Left ventricle myocardium superior (tissue), 1 donor: ENCODE measurements at regions of chr1 and their contacts with region 1.

Region 1: DNA sequence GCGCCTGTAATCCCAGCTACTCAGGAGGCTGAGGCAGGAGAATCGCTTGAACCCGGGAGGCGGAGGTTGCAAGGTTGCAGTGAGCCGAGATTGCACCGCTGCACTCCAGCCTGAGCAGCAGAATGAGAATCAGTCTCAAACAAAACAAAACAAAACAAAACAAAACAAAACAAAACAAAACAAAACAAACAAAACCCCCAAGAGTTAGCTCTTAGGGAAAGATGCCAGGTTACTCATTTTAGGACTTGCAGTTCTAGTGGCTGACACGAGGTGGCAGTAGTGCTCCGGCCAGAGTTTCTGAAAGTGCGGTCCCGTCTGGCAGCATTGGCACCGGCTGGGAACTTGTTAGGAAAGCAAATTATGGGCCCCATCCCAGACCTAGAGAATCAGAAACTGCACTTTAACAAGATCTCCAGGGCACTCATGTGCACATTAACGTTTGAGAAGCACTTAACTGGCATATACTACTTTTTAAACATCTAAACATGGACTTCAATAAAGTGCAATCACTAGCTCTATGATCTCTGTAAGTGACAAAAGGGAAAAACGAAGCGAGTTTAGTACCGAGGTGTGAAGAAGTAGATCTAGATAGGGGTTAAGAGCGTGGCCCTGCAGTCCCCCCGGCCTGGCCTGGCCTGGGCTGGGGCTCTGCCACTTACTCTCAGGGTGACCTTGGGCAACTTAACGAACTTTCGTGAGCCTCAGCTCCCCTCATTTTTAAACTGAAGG is 41.9 kb upstream of the TNFRSF1B start:
- DNase-seq: peak; percentile 84
- ATAC-seq: peak; percentile 80

Region 2: DNA sequence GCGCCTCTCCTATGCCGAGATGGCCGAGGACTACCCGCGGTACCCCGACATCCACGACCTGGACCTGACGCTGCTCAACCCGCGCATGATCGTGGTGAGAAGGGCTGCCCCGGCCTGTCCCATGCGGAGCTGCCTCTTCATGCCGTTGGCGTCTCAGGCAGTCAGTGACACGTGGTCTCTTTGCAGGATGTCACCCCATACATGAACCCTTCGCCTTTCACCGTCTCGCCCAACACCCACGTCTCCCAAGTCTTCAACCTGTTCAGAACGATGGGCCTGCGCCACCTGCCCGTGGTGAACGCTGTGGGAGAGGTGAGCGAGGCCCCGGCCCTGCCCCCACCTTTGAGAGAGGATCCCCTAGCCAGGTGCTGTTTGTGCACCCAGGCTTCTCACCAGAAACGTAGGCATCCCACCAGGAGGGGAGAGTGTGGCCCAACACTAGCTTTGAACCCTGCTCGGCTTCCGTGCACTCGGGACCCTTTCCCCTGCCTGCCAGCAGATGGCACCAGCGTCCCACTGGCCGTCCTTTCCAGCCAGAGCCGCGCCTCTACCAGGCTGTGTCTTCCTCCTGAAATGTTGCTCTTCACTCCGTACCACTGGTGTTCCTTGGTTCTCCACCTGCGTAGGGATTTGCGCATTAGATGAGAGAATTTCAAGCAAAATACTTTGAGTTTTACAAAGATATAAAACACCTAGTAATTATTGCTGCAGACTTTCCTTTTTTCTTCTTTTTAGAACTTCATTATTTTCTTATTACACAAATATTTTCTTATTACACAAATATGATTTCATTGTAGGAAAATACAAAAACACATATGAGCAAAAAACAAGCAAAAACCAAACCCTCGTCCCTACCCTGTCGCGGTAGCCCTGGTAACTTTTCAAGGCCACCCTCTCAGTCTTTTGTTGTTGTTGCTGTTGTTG is 286.2 kb before region 1 on chr1:
- intact Hi-C with region 1: no loop called
- DNase-seq: peak; percentile 84
- ATAC-seq: peak; percentile 78

Region 3: DNA sequence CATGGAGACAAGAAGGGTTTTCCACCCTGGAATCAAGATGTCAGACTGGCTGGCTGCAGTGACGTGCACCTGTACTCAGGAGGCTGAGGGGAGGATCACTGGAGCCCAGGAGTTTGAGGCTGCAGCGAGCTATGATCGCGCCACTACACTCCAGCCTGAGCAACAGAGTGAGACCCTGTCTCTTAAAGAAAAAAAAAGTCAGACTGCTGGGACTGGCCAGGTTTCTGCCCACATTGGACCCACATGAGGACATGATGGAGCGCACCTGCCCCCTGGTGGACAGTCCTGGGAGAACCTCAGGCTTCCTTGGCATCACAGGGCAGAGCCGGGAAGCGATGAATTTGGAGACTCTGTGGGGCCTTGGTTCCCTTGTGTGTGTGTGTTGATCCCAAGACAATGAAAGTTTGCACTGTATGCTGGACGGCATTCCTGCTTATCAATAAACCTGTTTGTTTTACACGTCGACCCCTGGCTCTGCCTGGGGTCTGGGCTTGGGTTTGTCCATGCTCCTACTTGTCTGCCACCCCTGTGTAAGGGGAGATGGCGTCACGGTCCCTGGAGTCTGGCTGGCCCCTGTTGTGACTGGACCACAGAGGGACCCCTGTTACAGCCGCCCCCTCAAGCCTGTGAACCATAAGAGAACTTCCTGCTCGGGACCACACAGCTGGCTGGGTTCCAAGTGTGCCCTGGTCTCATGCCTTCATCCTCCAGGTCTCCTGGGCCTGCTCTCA is 84.1 kb after region 1 on chr1:
- intact Hi-C with region 1: loop called (anchors 2 kb)
- DNase-seq: peak; percentile 92
- ATAC-seq: peak; percentile 92